Left cardiac atrium (tissue), 4 donors: ENCODE measurements at regions of chr17 and their contacts with region 1.

Region 1: DNA sequence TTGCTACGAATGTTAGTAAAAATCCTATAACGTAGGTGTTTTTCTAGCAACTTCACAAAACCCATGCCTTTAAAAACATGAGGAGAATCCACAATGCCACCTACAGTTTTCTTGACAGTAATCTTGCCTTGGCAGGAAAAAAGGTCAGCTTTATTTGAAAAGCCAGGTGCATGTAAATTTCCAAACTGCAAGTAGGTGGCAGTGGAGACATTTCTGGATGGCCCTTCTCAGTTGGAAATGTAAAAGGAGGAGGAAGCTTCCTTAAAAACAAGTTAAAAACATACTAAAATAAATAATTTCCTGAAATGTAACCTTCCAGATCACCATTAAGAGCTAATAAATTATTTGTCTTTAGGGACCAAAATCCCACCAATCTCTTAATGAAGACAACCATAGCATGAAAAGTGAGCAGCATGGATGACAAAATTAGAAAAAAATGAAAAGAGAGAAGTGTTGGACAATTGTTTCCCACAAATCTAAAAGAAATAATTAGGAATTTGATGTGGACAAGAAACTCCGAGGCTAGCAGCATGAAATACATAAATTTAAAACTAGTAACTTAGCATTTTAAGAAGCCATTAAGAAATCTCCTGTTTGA is 152.2 kb downstream of the SNX11 start:
- DNase-seq: no peak
- ATAC-seq: no peak

Region 2: GRCh38 chr17:48207776-48208544 is 51.8 kb before region 1 on chr17:
- intact Hi-C with region 1: no loop called
- DNase-seq: no peak
- ATAC-seq: no peak

Region 3: GRCh38 chr17:48457080-48457836 is 197.5 kb after region 1 on chr17:
- intact Hi-C with region 1: loop called in 1 of 2 experiments (anchors 5 kb)
- DNase-seq: peak; percentile 56
- ATAC-seq: peak; percentile 79 to 86

Region 4: DNA sequence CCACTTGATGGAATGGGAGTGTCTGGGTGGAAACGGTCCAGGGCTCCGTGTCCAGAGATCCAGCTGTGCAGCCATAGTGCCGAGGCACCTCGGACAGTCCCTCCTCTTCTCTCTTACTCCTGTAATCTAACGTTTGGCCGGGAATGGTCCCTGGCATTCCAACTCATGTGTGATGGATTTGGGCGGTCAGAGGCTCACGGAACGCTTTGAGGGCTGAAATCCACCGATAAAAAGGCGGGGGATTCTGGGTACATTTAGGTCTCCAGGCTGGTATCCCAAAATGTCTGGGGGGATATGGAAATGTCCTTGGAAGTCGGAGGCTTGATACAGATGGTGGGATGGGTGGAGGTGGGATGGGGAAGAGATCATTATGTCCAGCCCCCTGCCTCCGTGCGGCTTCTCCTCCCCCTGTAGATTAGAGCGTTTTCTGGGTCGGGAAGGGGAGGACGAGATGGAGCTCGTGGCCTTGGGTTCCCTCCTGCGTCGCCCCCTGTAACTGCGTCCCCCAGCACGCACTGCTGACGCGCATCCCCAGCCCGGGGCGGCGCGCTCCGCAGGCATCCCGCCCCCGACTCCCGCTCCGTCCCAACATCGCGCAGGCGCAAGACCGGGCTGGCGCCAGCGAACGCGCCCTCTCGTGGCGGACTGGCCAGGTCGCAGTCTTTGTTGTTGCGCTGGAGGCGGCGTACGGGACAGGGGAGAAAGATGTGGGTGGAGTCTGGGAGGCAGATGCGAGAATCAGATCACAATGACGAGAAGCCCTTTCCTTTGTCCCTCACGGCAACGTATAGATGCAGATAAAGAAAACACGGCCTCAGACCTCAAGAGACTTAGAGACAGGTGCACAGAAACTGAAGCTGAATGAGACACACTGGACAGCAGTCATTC is 1901.5 kb after region 1 on chr17:
- intact Hi-C with region 1: no loop called
- DNase-seq: peak; percentile 91
- ATAC-seq: peak; percentile 91 to 92